Activated CD8-positive, alpha-beta memory T cell treated with anti-CD3 and anti-CD28 coated beads, Interleukin-2, amount 10 ng/mL, durations not matched to agents 7 days and 5 days (primary cell): ENCODE measurements at regions of chr3 and their contacts with region 1.

Region 1: DNA sequence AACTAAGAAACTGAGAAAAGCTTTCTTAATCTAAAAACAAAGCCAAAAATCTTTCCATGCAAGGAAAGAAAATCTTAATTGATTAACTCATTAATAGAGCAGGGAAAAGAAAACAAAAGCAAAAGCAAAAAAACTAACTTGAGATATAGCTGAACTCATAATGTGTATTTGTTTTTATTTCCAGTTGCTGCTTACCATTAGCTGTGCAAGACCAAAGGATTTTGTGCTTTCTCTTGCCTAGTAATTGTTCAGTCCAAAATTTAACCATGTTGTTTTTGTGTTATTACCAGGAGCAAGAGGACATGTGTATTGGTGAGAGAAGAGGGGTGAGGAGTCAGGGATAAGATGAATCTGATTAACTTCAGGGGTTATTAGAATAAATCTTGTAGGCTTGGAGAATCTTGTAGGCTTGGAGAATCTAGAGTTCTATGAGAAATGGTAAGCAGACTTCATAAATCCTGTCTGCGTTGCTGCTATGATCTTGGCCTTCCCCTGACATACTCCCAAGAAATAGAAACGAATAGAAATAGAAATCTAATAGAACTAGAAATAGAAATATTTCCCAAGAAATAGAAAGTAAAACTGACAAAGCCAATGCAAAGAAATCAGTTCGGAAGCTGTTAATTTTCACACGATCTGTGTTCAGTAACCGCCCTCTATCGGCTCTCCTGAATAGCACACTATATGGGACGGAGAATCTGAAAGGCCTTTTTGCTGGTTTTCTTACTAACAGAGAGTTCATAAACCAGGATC is 72.6 kb upstream of the TNFSF10 start:
- DNase-seq: peak; percentile 72
- ATAC-seq: peak; percentile 34
- H3K4me3 Mint-ChIP-seq: peak overlapping the region; percentile 72
- H3K27ac Mint-ChIP-seq: peak overlapping the region; percentile 84
- H3K4me1 Mint-ChIP-seq: peaks cover 59% of the 10 kb centered on the region
- H3K27me3 Mint-ChIP-seq: peaks cover 6% of the 10 kb centered on the region

Region 2: DNA sequence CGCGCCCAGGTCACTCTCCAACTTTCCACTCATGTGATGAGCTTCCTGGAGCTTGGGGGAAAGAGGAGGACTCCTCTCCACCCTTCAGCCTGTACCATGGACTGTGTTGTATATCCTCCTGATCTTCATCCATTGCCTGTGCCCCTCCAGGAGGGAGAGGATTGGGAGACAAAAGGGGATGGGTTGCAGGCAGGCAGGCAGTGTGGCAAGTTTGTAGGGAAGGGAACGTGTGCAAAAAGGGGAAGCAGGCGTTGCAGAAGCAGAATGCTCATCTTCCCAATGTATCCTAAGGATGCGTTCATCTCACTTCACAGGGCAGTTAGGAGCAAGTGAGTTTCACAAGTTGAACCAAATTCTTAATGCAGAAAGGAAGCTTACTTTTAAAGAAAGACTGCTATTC is 119.5 kb before region 1 on chr3:
- CTCF ChIA-PET with region 1: interaction called, 24 read pairs
- DNase-seq: no peak
- ATAC-seq: no peak
- H3K4me3 Mint-ChIP-seq: peak overlapping the region; percentile 79
- H3K27ac Mint-ChIP-seq: peak overlapping the region; percentile 9
- H3K4me1 Mint-ChIP-seq: peaks cover 19% of the 10 kb centered on the region
- H3K27me3 Mint-ChIP-seq: peaks cover 10% of the 10 kb centered on the region

Region 3: GRCh38 chr3:172511783-172512762 is 83.7 kb before region 1 on chr3:
- CTCF ChIA-PET with region 1: interaction called, 146 read pairs
- DNase-seq: peak; percentile 81
- ATAC-seq: peak; percentile 63
- H3K4me3 Mint-ChIP-seq: peak overlapping the region; percentile 46
- H3K27ac Mint-ChIP-seq: peak overlapping the region; percentile 87
- H3K4me1 Mint-ChIP-seq: peaks cover 88% of the 10 kb centered on the region
- H3K27me3 Mint-ChIP-seq: no peaks in the 10 kb centered on the region

Region 4: DNA sequence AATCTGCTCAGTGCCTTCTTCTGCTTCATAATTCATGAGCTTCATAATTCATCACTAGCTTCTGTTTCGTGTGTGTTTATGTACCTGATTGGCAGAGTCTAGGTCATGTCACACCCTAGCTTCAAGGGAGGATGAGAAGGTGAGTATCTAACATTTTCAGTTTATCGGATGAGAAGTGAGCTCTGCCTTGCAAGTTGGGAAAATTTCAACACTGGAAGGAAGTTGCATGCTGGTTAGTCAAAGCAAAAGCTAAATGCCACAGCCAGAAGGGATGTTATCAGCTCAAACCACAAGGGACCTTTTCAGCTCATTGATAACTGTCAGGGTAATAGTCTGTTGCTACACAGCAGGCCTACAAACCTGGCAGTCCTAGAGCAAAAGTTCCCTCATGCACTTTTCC is 65.3 kb before region 1 on chr3:
- CTCF ChIA-PET with region 1: interaction called, 49 read pairs
- DNase-seq: peak; percentile 70
- ATAC-seq: peak; percentile 84
- H3K4me3 Mint-ChIP-seq: peak overlapping the region; percentile 42
- H3K27ac Mint-ChIP-seq: peak overlapping the region; percentile 88
- H3K4me1 Mint-ChIP-seq: peaks cover 56% of the 10 kb centered on the region
- H3K27me3 Mint-ChIP-seq: no peaks in the 10 kb centered on the region

Region 5: DNA sequence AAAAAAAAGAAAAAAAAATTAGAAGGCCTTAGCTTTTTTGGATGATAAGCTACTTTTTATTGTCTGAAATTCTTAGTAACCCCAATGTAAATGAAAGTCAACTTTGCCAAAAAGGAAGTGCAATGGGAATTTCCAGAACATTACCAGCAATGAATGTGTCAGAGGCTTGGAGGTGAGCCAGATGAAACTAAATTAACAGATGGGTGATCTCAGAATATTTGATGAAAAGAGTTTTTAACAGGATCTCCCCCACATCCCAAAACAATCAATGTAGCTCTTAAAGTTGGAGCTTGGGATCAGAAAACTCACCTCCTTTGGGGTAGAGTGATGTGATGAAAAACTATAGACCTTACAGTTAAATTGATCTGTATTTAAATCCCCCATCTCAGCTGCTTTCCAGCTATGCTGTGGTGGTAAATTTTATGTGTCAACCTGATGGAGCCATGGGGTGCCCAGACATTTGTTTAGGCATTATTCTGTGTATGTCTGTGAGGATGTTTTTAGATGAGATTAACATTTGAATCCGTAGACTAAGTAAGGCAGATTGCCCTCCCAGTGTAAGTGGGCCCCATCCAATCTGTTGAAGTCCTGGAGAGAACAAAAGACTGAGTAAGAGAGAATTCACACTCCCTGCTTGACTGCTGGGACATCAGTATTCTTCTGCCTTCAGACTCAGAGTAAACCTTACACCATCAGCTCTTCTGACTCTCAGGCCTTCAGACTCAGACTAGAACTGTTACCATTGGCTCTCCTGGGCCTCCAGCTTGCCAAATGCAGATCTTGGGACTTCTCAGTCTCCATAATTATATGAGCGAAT is 11.7 kb after region 1 on chr3:
- CTCF ChIA-PET with region 1: interaction called, 14 read pairs
- DNase-seq: peak; percentile 33
- ATAC-seq: no peak
- H3K4me3 Mint-ChIP-seq: no peak overlapping the region
- H3K27ac Mint-ChIP-seq: no peak overlapping the region
- H3K4me1 Mint-ChIP-seq: peaks cover 12% of the 10 kb centered on the region
- H3K27me3 Mint-ChIP-seq: no peaks in the 10 kb centered on the region